ENCODE measurements at regions of chr2 and their contacts with region 1.

Region 1: DNA sequence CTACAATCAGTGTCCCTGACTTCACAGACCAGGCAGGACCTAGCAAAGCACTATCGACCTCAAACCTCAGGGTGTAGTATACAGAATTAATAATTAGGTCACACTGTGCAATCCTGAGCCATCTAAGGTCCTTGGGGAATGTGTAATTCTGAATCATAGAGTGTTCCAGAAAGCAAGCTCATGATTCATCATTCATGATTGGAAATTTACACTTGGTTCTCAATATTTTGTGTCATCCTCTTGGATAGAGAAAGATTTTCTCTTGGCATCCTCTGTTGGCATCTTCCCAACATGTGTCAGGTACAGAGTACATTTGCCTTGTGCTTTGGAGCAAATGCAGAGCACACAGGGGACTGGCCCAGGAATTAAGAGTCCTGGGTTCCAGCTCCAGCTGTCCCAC is 245.0 kb upstream of the NT5C1B start:
- DNase-seq: no peak
- H3K4me3 ChIP-seq: no peak overlapping the region
- H3K27ac ChIP-seq: no peak overlapping the region; a peak in 1 of 4 replicates
- H3K4me1 ChIP-seq: peaks cover 4 to 41% of the 10 kb centered on the region in 2 experiments
- H3K27me3 ChIP-seq: no peaks in the 10 kb centered on the region
- CTCF ChIP-seq: no peak
- EP300 ChIP-seq: peak in 1 of 2 experiments; percentile 85; a peak in 1 of 4 replicates
- RAD21 ChIP-seq: no peak

Region 2: DNA sequence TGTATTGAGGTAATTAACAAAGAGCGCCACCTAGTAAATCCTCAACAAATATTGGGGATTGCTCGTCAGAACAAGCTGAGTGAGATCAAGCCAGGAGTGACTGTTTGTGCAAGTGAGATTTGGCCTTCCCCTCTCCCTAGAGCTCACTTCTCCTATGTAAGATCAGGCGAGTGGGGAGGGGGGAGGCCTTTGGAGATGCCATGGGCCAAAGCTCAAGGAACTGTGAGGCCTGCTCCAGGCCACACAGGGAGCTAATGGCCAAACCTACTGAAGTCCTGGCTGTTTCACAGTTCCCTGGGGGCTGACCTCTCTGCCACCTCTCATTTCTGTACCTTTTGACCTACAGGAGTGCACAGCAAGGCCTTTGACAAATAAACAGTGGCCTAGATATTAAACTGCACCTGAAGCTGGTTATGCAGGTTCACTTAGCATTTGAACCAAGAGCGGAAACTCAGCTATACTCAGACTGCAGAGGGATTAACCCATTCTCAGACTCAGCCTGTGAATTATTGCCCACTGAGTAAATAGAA is 10.0 kb before region 1 on chr2:
- CTCF ChIA-PET with region 1: interaction called, 22 read pairs
- POLR2A ChIA-PET with region 1: no interaction called
- DNase-seq: no peak
- H3K4me3 ChIP-seq: no peak overlapping the region
- H3K27ac ChIP-seq: no peak overlapping the region
- H3K4me1 ChIP-seq: peaks cover 0 to 12% of the 10 kb centered on the region in 2 experiments; a peak in 2 of 4 replicates
- H3K27me3 ChIP-seq: no peaks in the 10 kb centered on the region
- CTCF ChIP-seq: no peak
- EP300 ChIP-seq: no peak
- RAD21 ChIP-seq: no peak

Measured in SK-N-SH (cell line).